Ascending aorta (tissue), 2 donors: ENCODE measurements at regions of chr6 and their contacts with region 1.

Region 1: GRCh38 chr6:39599973-39600372 is 125.2 kb downstream of the KIF6 start:
- DNase-seq: no peak
- H3K4me3 ChIP-seq: no peak overlapping the region
- H3K27ac ChIP-seq: no peak overlapping the region
- H3K4me1 ChIP-seq: no peaks in the 10 kb centered on the region
- H3K27me3 ChIP-seq: no peaks in the 10 kb centered on the region
- CTCF ChIP-seq: no peak

Region 2: DNA sequence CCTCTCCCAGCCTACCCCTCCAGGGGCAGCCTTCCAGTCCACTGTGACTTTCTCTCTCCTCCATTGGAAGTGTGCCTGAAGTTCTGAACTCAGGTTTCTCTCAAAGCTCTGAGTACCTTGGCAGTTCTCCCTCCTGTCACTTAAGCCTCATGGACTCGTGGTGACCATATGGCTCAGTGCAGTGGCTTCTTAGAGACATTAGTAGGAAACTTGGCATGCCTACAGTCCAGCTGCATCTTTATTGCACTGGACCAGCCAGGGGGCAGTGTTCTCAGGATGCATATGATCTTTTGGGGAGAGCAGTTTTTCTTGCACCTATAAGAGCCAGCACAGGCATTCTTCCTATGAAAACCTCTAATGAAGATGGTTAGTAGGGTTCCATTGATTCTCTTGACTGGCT is 230.0 kb before region 1 on chr6:
- intact Hi-C with region 1: loop called (anchors 5 kb)
- DNase-seq: no peak
- H3K4me3 ChIP-seq: no peak overlapping the region
- H3K27ac ChIP-seq: no peak overlapping the region
- H3K4me1 ChIP-seq: peaks cover 0 to 6% of the 10 kb centered on the region in 2 donors
- H3K27me3 ChIP-seq: no peaks in the 10 kb centered on the region
- CTCF ChIP-seq: peak in 1 of 3 experiments; percentile 31

Region 3: DNA sequence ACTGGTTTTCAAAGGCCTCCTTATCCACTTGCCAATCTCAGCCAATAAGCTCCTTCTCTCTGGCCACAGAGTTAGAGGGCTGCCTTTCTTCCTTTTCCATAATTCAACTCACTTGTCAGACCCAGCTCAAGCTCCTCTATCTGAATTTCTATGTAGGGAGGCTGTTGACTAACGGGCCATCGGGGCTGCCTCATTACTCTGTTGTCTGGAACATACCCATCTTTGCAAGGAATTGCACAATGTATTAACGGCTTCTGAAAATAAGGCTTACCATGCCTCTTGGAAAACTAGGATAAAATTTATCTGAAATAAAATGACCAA is 153.7 kb after region 1 on chr6:
- intact Hi-C with region 1: no loop called
- DNase-seq: peak in 1 of 2 donors; percentile 70
- H3K4me3 ChIP-seq: no peak overlapping the region
- H3K27ac ChIP-seq: peak overlapping the region; percentile 67 to 73
- H3K4me1 ChIP-seq: peaks cover 0 to 12% of the 10 kb centered on the region in 2 donors
- H3K27me3 ChIP-seq: no peaks in the 10 kb centered on the region
- CTCF ChIP-seq: no peak